Aorta (tissue), 5 donors: ENCODE measurements at regions of chr7 and their contacts with region 1.

Region 1: DNA sequence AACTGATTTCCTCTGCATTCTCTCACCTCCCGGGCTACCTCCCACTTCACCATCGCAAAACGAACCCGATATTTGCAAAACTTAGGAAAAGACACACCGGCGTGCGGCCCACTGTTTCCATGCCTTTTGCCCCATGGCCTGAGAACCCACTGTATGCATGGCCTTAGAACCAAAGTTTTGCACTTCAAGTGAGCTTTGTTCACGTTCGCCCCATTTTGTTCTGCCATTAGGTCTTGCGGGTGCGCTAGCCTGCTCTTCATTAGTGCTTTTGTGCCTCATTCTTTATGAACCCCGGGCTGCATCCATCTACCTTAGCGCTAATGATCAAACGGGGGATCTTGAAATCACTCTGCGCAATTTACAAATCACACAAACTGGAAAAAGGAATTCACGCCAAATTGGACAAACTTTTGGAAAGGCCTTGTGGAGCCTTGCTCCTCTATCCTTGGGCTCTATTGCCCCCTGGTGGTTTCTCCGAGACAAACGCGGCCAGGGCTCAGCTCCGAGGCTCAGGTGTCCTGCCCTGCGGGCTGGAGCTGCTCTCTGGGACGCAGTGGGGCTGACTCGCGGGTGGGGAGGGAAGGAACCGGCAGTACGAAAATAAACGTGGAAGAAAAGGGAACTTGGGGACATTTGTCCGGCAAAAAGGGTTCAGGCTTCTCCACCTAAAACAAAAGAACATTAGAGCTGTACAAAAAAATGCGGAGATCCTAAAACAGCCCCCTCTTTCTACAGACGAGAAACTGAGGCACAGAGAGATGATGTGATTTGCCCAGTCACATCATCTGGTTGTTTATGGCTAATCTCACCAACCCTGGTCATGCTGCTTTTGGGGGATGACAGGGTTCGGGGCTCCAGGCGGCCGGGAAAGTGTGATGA is 300.4 kb upstream of the NFE2L3 start:
- DNase-seq: peak; percentile 84 to 94
- ATAC-seq: peak; percentile 81
- H3K4me3 ChIP-seq: no peak overlapping the region
- H3K27ac ChIP-seq: no peak overlapping the region
- H3K4me1 ChIP-seq: peaks cover 5 to 8% of the 10 kb centered on the region in 2 donors
- H3K27me3 ChIP-seq: no peaks in the 10 kb centered on the region

Region 2: GRCh38 chr7:25259587-25260243 is 591.9 kb before region 1 on chr7:
- intact Hi-C with region 1: loop called (anchors 5 kb)
- DNase-seq: peak in 1 of 2 donors; percentile 59
- ATAC-seq: peak; percentile 70
- H3K4me3 ChIP-seq: no peak overlapping the region
- H3K27ac ChIP-seq: no peak overlapping the region
- H3K4me1 ChIP-seq: no peaks in the 10 kb centered on the region
- H3K27me3 ChIP-seq: no peaks in the 10 kb centered on the region

Region 3: DNA sequence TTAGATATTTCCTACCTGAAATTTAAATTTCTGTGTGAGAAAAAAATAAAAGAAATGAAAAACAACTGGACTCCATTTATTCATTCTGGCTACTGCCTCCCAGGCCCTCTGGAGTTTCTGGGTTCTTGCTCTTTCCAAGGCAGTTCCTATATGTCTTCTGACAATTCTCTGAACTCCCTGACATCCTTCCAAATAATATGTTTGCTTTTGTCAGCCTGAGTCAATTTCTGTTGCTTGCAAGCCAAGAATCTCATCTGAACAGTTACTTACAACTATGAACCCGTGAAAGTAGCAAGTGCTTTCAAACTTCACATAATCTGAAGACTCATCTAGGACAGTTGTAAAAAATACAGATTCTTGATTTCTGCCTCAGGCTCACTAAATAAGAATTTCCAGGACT is 406.6 kb before region 1 on chr7:
- intact Hi-C with region 1: loop called in 1 of 2 experiments (anchors 5 kb)
- DNase-seq: no peak
- ATAC-seq: no peak
- H3K4me3 ChIP-seq: no peak overlapping the region
- H3K27ac ChIP-seq: no peak overlapping the region
- H3K4me1 ChIP-seq: no peaks in the 10 kb centered on the region
- H3K27me3 ChIP-seq: no peaks in the 10 kb centered on the region

Region 4: GRCh38 chr7:25481891-25482290 is 369.7 kb before region 1 on chr7:
- intact Hi-C with region 1: no loop called
- DNase-seq: no peak
- ATAC-seq: no peak
- H3K4me3 ChIP-seq: no peak overlapping the region
- H3K27ac ChIP-seq: no peak overlapping the region
- H3K4me1 ChIP-seq: peaks cover 0 to 1% of the 10 kb centered on the region in 2 donors
- H3K27me3 ChIP-seq: no peaks in the 10 kb centered on the region

Region 5: DNA sequence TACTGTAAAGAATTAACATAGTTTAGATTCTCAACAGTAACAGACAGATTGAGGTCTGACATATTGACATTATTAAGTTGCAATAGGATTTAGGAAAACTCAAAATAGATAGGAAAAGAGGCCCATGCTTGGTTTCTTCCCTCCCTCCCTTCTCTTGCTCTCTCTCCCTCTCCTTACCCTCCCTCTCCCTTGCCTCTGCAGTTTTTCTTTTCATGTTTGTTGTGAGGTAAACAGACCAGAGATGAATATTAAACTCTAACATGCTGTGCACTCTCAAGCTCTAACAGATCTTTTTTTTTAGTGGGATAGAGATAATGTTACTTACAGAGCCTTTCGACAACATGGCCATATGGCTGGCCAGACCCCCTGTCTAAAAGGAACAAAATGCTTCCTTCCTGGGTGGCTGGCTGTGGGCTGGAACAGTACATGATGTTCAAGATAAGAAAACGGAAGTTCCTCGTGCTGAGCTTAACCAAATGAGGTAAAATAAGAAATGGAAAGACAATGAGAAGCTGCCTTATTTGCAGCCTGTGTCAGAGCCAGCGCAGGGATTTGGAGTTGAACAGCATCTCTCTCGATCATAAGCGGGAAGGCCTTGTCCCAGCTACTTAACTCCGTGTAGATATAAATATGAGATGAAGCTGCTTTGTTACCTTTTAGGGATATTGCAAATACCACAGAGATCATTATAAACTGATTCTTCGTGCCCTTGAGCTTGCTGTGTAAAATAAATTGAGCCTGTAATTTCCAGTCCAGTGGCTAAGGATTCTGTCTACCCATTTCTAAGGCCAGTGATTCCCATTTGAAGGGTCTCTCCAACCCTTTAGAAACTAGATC is 231.4 kb before region 1 on chr7:
- intact Hi-C with region 1: loop called in 1 of 2 experiments (anchors 5 kb)
- DNase-seq: no peak
- ATAC-seq: no peak
- H3K4me3 ChIP-seq: no peak overlapping the region
- H3K27ac ChIP-seq: peak overlapping the region in 1 of 2 donors; percentile 32
- H3K4me1 ChIP-seq: peaks cover 11 to 24% of the 10 kb centered on the region in 2 donors
- H3K27me3 ChIP-seq: no peaks in the 10 kb centered on the region

Region 6: DNA sequence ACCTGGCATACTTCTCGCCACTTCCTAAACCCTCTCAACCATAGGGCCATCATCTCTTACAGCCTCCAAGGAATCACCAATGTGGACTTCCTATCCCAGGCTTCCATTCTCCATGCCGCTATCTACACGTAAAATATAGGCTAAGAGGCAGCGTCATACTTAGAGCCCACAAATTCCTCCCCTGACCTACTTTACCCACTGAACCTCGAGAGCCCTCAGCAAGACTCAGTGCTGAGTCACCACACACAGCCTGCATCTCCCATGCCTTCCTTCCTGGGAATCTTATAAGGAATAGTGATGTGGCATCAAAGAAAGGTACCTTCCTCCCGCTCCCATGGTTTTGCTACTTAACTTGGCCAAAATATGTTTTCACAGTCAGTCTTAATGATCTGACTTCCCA is 135.2 kb before region 1 on chr7:
- intact Hi-C with region 1: loop called in 1 of 2 experiments (anchors 5 kb)
- DNase-seq: no peak
- ATAC-seq: no peak
- H3K4me3 ChIP-seq: no peak overlapping the region
- H3K27ac ChIP-seq: no peak overlapping the region
- H3K4me1 ChIP-seq: peaks cover 3 to 6% of the 10 kb centered on the region in 2 donors
- H3K27me3 ChIP-seq: no peaks in the 10 kb centered on the region

Region 7: DNA sequence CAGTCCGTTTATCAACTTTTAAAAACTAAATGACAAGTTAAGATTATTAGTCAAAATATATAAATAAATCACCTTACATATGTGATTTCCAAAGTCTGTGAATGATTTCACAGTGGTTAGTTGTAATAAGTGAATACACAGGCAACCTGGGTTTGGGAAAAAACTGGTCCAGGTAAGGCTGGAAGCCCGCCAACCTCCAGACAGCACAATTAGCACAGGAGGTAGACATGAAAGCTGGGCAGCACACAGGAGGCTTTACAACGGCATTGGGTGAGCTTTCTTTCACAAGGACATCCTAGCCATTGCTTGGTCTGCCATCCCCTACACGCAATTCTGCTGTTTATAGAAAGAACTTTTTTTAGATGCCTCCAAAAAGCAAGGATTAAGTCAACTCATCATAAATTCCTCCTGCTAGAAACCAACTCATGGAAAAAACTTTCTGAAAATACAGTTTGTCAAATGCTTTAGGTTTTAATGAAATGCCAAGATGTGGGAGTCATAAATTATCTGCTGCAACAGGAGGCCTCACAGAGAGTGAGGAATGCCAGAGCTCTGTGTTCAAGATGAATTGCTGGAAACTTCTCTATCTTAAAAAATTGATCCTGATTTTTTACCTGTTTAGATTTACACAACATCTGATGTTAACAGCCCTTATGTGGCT is 46.4 kb before region 1 on chr7:
- intact Hi-C with region 1: loop called (anchors 5 kb)
- DNase-seq: no peak
- ATAC-seq: peak; percentile 59
- H3K4me3 ChIP-seq: no peak overlapping the region
- H3K27ac ChIP-seq: peak overlapping the region in 1 of 2 donors; percentile 79
- H3K4me1 ChIP-seq: peaks cover 6 to 7% of the 10 kb centered on the region in 2 donors
- H3K27me3 ChIP-seq: no peaks in the 10 kb centered on the region

Region 8: GRCh38 chr7:25913598-25914224 is 62.1 kb after region 1 on chr7:
- intact Hi-C with region 1: no loop called
- DNase-seq: no peak
- ATAC-seq: no peak
- H3K4me3 ChIP-seq: no peak overlapping the region
- H3K27ac ChIP-seq: no peak overlapping the region
- H3K4me1 ChIP-seq: no peaks in the 10 kb centered on the region
- H3K27me3 ChIP-seq: no peaks in the 10 kb centered on the region

Region 9: DNA sequence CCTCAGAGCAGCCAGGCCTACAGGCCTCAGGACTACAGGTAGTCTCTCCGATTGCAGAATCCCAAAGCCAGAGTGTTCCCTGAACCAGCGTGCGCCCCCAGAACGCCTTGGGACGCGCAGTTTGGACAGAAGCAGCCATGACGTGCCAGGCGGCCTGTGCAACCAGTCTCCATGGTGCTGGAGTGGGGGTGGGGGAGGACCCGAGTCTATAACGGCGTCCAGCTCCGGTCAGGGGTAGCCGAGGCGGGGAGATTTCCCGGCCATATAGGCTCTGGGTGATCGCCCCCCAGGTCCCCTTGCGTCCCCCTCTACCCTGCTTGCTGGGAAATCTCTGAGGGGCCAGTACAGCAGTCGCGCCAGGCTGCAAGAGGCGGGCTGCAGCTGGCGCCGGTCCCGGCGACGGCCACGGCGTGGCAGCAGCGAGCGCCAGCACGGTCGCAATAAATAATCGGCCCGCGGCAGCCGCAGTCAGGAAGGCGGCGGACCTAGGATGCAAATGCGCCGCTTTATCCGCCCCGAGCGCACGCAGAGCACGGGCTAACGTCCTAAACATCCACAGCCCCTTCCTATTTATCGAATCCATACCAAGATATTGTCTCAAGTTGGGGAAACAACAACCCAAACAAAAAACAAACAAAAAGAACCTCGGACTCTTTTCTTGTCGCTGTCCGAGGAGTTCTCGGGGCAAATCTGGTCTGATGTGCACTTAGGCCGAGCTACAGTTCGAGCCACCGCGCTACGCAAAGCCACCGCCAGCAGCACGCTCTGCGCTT is 1299.2 kb after region 1 on chr7:
- intact Hi-C with region 1: loop called in 1 of 2 experiments (anchors 5 kb)
- DNase-seq: peak; percentile 84 to 93
- ATAC-seq: peak; percentile 81
- H3K4me3 ChIP-seq: peak overlapping the region; percentile 7 to 33
- H3K27ac ChIP-seq: peak overlapping the region in 1 of 2 donors; percentile 65
- H3K4me1 ChIP-seq: peaks cover 0 to 2% of the 10 kb centered on the region in 2 donors
- H3K27me3 ChIP-seq: no peaks in the 10 kb centered on the region